Right ventricle myocardium inferior (tissue), 1 donor: ENCODE measurements at regions of chr1 and their contacts with region 1.

Region 1: GRCh38 chr1:62746085-62746808 is 37.7 kb upstream of the ATG4C start:
- DNase-seq: no peak
- ATAC-seq: no peak

Region 2: DNA sequence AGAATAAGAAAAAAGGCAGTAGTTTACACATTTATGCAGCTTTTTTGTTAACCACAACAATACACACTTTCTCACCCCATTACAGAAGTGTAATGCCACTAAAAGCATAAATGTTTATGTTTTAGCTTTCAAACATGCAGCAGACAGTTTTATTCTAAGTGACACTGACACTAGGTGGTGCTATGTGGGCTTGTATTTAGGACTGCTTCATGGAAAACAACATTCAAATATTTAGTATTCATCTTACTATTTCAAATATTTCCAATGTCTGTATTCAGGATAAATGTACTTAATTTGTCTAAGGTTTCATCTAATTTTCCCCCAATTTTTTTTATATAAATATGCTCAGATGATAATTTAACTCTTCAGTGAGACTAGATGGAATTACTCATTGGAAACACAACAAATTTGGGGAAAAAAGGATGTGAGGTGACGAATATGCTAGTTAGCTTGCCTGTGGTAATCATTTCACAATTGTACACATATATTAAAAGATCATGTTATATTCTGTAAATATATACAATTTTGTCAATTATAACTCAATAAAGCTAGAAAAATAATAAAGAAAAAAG is 238.0 kb before region 1 on chr1:
- intact Hi-C with region 1: loop called (anchors 2 kb)
- DNase-seq: no peak
- ATAC-seq: no peak

Region 3: DNA sequence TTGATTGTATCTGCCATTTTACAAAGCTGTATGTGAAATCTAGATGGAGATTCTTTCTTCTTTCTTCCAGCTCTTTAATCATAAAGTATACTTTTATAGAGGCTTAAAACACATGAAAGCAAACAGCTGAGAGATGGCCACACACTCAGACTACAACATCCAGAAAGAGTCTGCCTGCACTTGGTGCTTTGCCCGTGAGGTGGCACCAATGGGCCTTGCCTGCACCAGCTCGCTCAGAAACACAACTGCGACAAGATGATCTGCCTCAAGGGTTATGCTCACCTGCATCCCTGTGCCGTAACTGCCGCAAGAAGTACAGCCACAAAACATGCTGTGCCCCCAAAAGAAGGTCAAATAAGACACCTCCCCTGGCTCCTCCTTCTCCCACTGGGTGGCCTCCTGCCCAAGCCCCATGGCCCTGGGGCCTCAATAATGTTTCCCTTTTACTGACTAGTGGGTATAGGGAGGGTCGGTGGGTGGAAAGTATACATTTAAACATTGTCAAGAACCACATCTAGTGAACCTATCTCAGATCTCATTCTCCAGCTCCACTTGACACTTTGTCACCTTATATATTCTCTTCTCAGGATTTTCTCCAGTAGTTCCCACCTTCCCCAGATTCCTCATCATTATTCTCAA is 215.6 kb before region 1 on chr1:
- intact Hi-C with region 1: loop called (anchors 2 kb)
- DNase-seq: no peak
- ATAC-seq: peak; percentile 37

Region 4: GRCh38 chr1:62691062-62691844 is 55.0 kb before region 1 on chr1:
- intact Hi-C with region 1: loop called (anchors 5 kb)
- DNase-seq: no peak
- ATAC-seq: no peak